ENCODE measurements at regions of chr16 and their contacts with region 1.

Region 1: GRCh38 chr16:58124601-58124915 is 4.6 kb downstream of the CFAP20 start:
- DNase-seq: no peak
- H3K4me3 ChIP-seq: no peak overlapping the region
- H3K27ac ChIP-seq: peak overlapping the region in 1 of 2 donors; percentile 12
- H3K4me1 ChIP-seq: peaks cover 57% of the 10 kb centered on the region
- H3K27me3 ChIP-seq: no peaks in the 10 kb centered on the region
- CTCF ChIP-seq: no peak
- POLR2A ChIP-seq: no peak

Region 2: DNA sequence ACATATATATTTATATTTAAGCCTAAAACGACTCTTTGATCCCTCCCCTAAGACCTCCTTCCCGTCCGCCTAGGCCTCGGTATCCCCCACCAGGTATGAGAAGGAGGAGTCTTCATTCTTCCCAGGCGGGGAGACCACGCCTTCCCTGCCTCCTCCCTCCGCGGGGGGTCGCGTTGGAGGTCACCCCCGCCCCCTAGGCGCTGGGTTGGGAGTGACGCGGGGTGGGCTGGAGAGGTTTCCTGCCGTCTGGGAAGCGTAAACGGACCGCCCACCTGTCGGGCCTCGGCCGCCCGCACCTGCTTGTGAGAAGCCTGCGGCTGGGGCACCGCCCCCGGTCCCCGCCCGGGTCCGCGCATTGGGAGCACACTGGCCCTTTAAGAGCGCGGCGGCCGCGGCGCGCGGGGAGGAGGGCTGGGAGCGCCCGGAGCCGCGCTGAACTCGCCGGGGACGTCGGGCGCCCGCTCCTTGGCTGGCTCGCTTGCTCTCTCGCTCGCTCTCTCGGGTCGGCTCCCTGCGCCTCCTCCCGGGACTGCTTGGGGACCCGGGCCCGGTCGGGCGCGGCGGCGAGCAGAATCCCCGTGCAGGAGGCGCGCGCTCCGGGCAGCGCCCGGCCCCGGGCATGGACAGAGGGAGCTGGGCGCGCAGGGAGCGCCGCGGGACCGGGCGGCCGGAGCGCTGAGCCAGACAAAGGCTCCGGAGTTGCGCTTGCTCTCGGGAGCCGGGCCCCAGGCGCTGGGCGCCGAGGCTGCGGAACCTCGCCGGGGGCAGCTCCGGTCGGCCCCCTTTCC is 99.0 kb before region 1 on chr16 and contains the start of gene MMP15:
- intact Hi-C with region 1: loop called (anchors 5 kb)
- DNase-seq: peak; percentile 87
- H3K4me3 ChIP-seq: peak within 1 kb of the TSS; percentile 70 to 76
- H3K27ac ChIP-seq: peak within 1 kb of the TSS; percentile 74 to 80
- H3K4me1 ChIP-seq: peaks cover 57% of the 10 kb centered on the region
- H3K27me3 ChIP-seq: no peaks in the 10 kb centered on the region
- CTCF ChIP-seq: no peak
- POLR2A ChIP-seq: no peak
- total RNA-seq, gene MMP15: 194 to 300 TPM

Measured in testis (tissue), 5 donors.